WTC11 (cell line): ENCODE measurements at regions of chr7 and their contacts with region 1.

Region 1: DNA sequence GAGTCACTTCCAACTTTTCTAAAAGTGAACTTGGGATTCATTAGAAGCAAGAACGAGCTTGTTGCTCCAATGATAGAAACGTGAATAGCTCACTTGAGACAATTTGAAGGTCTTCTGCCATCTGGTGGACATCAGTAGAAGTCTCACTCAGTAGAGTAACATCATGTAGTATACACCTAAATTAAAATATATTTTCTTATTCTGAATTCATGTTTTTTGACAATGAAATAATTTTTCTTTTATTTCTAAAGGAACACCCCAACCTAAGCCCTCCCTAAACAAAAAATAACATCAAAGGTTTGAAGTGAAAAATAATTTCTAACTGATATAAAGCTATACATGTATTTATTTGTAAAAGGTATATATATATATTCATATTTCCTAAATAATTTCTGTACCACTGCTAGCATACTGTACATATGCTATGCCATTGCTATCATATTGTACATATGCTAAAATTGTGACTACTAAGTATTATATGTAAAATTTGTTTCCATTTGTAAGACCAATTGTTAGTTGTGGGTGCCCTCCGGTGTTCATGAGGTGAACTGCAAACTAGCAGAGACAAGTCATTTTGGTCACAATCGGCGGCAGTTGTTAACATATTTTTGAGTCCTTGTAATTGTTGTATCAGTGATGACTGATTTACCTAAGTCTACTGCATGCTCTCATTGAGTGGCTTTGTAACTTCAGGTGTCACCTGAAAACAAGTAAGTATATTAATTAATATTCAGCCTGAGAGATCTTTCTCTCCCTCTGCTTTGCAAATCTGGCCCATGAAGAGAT is 121.9 kb downstream of the PTPRZ1 start:
- DNase-seq: peak; percentile 71
- ATAC-seq: peak; percentile 75
- H3K4me3 Mint-ChIP-seq: no peak overlapping the region
- H3K27ac Mint-ChIP-seq: peak overlapping the region; percentile 41; the same call in 1 of the 2 replicates
- H3K4me1 Mint-ChIP-seq: peaks cover 12% of the 10 kb centered on the region
- H3K27me3 Mint-ChIP-seq: no peaks in the 10 kb centered on the region
- CTCF ChIP-seq: peak; percentile 78

Region 2: GRCh38 chr7:121395961-121396757 is 598.7 kb before region 1 on chr7 and contains the start of gene FAM3C:
- CTCF ChIA-PET with region 1: interaction called, 15 read pairs
- POLR2A ChIA-PET with region 1: no interaction called
- DNase-seq: peak; percentile 90
- ATAC-seq: peak; percentile 95
- H3K4me3 Mint-ChIP-seq: peak within 1 kb of the TSS; percentile 93
- H3K27ac Mint-ChIP-seq: peak within 1 kb of the TSS; percentile 87
- H3K4me1 Mint-ChIP-seq: peaks cover 20% of the 10 kb centered on the region
- H3K27me3 Mint-ChIP-seq: no peaks in the 10 kb centered on the region
- CTCF ChIP-seq: peak; percentile 89
- total RNA-seq, gene FAM3C: 51.2 to 65.7 TPM (median 54.4 TPM) in 3 replicates

Region 3: DNA sequence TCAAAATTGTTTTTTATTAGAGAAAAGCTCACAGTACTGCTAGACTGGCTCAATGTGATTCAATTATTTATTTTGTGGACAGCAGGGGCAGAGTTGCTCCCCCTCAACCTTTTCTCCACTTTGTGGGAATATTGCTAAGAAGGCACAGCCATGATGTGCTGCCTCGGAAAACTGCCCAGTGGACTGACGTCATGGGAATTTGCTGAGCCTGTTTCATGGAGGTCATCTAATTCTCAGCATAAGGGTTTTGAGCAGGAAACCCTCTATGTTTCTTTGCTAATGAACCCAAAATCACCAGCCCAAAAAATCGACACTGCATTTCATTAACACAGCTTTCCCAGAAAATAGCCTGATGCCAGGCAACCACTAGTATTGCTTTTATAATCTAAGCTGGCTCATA is 369.9 kb before region 1 on chr7:
- CTCF ChIA-PET with region 1: interaction called, 23 read pairs
- POLR2A ChIA-PET with region 1: interaction called, 3 read pairs
- DNase-seq: no peak
- ATAC-seq: no peak
- H3K4me3 Mint-ChIP-seq: no peak overlapping the region
- H3K27ac Mint-ChIP-seq: no peak overlapping the region
- H3K4me1 Mint-ChIP-seq: peaks cover 19% of the 10 kb centered on the region
- H3K27me3 Mint-ChIP-seq: no peaks in the 10 kb centered on the region
- CTCF ChIP-seq: no peak

Region 4: DNA sequence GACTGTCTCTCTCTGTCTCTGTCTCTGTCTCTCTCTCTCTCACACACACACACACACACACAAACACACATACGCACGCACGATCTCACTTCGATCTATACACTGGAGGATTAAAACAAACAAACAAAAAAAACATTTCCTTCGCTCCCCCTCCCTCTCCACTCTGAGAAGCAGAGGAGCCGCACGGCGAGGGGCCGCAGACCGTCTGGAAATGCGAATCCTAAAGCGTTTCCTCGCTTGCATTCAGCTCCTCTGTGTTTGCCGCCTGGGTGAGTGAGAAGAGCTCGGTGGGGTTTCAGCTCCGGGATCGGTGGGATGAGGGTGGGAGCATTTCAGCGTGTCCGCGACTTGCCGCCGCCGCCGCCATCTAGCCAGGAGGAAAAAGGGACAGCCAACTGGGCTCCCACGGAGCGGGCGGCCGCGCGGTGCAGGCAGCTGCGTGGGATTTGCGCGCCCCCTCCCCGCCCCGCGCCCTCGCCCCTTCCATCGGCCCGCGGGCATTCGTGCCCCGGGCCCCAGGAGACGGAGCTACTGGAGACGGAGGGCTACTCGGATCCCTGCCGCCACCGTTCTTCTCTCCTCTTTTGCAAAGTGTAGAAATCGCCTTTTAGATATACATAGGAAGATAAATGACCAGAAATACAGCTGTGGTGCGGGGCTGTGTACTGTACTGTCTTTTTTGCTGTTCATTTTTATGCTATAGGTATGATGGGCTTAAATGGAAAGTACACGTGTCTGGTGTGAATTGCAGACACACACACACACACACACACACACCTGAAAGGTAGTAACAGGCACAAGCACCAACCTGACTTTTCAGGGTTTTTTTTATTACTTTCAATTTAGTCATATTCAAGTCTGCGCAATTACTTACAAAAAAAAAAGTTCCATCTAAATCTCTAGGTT is 121.3 kb before region 1 on chr7:
- CTCF ChIA-PET with region 1: interaction called, 12 read pairs
- POLR2A ChIA-PET with region 1: no interaction called
- DNase-seq: peak; percentile 51
- ATAC-seq: peak; percentile 43
- H3K4me3 Mint-ChIP-seq: peak overlapping the region; percentile 99
- H3K27ac Mint-ChIP-seq: peak overlapping the region; percentile 97
- H3K4me1 Mint-ChIP-seq: peaks cover 48% of the 10 kb centered on the region
- H3K27me3 Mint-ChIP-seq: no peaks in the 10 kb centered on the region
- CTCF ChIP-seq: no peak

Region 5: DNA sequence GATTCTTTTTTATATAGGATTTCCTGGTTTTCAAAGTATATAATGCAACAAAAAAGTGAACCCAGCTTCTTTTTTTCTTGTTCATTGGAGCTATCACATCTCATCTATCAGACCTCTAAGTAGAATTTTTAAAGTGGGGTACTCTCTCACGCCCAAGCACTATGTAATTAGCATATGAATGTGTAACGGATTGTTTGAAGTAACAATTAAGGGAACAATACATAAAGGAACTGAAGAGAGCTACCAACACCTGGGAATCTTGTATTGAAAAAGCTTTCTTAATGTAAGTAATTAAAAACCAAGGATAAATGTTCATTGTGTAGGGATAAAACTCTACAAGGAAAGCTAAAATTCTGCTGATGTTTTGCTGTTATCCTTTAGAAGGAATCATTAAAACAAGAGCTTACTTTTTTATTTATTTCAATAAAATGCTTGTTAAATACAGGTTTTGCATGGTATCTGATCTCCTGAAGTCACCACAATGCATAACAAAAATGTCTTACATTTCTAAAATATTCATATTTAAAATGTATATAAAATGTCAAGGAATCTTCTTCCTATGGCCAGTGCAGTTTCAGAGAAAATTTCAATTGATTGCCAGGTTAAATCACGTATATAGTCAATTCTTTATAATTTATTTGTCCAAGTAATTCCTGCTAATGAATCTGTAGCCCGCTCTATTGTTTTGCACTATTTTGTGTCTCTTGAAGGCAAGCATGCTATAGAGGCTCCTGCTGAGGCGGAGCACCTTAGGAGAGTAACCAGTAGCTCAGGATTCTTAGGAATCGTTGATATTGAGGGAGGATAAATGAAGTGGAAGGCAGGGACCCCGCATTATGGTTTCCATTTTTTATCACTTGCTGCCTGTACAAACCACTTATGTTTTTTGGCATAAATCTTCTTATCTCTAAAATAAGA is 70.3 kb before region 1 on chr7:
- CTCF ChIA-PET with region 1: interaction called, 22 read pairs
- POLR2A ChIA-PET with region 1: no interaction called
- DNase-seq: no peak
- ATAC-seq: peak; percentile 84
- H3K4me3 Mint-ChIP-seq: 0 out of 2 replicates have a peak overlapping the region, but pooled peaks have one; percentile 22
- H3K27ac Mint-ChIP-seq: peak overlapping the region; percentile 90; the same call in 1 of the 2 replicates
- H3K4me1 Mint-ChIP-seq: peaks cover 63% of the 10 kb centered on the region
- H3K27me3 Mint-ChIP-seq: no peaks in the 10 kb centered on the region
- CTCF ChIP-seq: no peak

Region 6: GRCh38 chr7:122006687-122007086 is 11.9 kb after region 1 on chr7:
- CTCF ChIA-PET with region 1: interaction called, 10 read pairs
- POLR2A ChIA-PET with region 1: no interaction called
- DNase-seq: no peak
- ATAC-seq: peak; percentile 82
- H3K4me3 Mint-ChIP-seq: no peak overlapping the region
- H3K27ac Mint-ChIP-seq: no peak overlapping the region
- H3K4me1 Mint-ChIP-seq: no peaks in the 10 kb centered on the region
- H3K27me3 Mint-ChIP-seq: no peaks in the 10 kb centered on the region
- CTCF ChIP-seq: no peak